ENCODE measurements at regions of chr2 and their contacts with region 1.

Region 1: GRCh38 chr2:677056-677965 is at the start of gene TMEM18:
- DNase-seq: peak; percentile 81 to 99 (median 97)
- ATAC-seq: peak; percentile 75
- H3K4me3 ChIP-seq: peak within 1 kb of the TSS; percentile 98
- H3K4me3 Mint-ChIP-seq: peak within 1 kb of the TSS; percentile 98
- H3K27ac ChIP-seq: peak within 1 kb of the TSS; percentile 98 to 99
- H3K27ac Mint-ChIP-seq: peak within 1 kb of the TSS; percentile 99
- H3K4me1 ChIP-seq: peaks cover 26% of the 10 kb centered on the region
- H3K4me1 Mint-ChIP-seq: peaks cover 45% of the 10 kb centered on the region
- H3K27me3 ChIP-seq: no peaks in the 10 kb centered on the region
- H3K27me3 Mint-ChIP-seq: no peaks in the 10 kb centered on the region
- CTCF ChIP-seq: peak; percentile 40
- total RNA-seq, gene TMEM18: 25.6 to 26.3 TPM

Region 2: DNA sequence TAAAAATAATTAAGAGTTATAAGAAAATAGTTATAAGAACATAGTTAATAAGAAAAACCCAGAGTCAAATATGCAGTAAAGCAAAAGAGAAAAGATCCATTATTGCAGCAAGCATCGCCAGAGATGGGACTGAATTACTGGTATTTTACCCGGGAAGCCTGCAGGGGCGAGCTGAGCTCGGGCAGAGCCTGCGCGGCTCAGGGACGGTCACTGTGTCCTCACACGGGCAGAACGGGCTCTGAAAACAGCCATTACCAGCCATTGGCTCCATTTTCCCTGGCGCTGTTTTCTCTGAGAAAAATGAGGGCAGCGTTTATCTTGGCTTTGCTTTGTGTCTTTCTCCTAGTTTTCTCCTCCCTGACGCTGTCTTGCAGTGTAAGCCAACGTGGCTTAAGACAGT is 294.1 kb before region 1 on chr2:
- CTCF ChIA-PET with region 1: no interaction called
- POLR2A ChIA-PET with region 1: no interaction called
- intact Hi-C with region 1: no loop called
- DNase-seq: no peak
- ATAC-seq: no peak
- H3K4me3 ChIP-seq: no peak overlapping the region
- H3K4me3 Mint-ChIP-seq: no peak overlapping the region
- H3K27ac ChIP-seq: no peak overlapping the region
- H3K27ac Mint-ChIP-seq: no peak overlapping the region
- H3K4me1 ChIP-seq: no peaks in the 10 kb centered on the region
- H3K4me1 Mint-ChIP-seq: no peaks in the 10 kb centered on the region
- H3K27me3 ChIP-seq: peaks cover 0 to 5% of the 10 kb centered on the region in 2 experiments
- H3K27me3 Mint-ChIP-seq: peaks cover 14% of the 10 kb centered on the region
- CTCF ChIP-seq: no peak

Region 3: DNA sequence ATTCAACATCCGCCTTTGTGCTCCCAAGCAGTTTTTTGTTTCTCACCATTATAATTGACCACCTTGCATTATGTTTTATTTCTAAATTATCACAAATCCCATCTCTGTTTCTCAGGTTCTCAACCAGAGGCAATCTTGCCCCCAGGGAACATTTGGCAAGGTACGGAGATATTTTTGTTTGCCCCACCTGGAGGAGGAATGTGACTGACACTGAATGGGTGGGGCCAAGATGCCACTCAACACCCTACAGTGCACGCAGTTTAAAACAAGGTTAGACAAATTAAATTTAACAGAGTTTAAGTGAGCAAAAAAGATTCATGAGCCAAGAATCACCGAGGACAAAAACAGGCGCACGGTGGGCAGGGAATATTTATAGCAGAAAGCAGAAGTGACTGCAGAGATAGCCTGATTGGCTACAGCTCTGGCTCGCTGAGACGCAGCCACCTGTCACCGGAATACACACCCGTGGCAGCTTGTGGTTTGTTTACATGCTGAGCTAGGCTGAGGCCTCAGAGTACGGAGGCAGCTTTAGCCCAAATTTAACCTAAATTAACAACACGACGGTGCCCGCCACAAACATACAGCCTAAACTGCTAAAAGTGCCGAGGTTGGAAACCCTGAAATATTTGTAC is 239.4 kb before region 1 on chr2:
- CTCF ChIA-PET with region 1: no interaction called
- POLR2A ChIA-PET with region 1: interaction called, 5 read pairs
- intact Hi-C with region 1: loop called (anchors 2 to 5 kb)
- DNase-seq: peak; percentile 49 to 91 (median 65)
- ATAC-seq: peak; percentile 100
- H3K4me3 ChIP-seq: peak overlapping the region; percentile 47
- H3K4me3 Mint-ChIP-seq: peak overlapping the region; percentile 85
- H3K27ac ChIP-seq: peak overlapping the region; percentile 64
- H3K27ac Mint-ChIP-seq: peak overlapping the region; percentile 94
- H3K4me1 ChIP-seq: peaks cover 24% of the 10 kb centered on the region
- H3K4me1 Mint-ChIP-seq: peaks cover 22% of the 10 kb centered on the region
- H3K27me3 ChIP-seq: no peaks in the 10 kb centered on the region
- H3K27me3 Mint-ChIP-seq: no peaks in the 10 kb centered on the region
- CTCF ChIP-seq: no peak

Measured in CD4-positive, alpha-beta T cell (primary cell).